Activated B cell treated with CpG ODN at 0.5 μM for 24 hours (primary cell): ENCODE measurements at regions of chr6 and their contacts with region 1.

Region 1: DNA sequence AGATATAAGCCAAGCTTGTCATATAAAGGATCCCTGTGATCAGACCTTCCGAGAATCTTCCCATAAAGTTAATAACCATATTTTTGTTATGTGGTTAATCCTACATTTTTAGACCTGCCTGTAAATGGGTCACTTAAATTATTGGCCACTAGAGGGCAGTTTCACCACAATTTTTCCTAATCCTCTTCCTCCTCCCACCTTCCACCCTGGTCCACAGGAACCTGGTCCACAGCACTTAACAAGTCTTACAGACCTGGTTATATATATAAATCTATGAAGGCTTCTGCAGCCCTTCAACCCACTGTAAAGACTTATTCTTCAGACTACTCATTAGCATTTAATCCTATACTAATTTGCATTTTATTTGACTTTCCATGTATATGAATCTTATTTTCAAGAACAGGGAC is 28.3 kb downstream of the MRS2 start:
- DNase-seq: no peak
- ATAC-seq: peak; percentile 42
- H3K4me3 Mint-ChIP-seq: no peak overlapping the region
- H3K27ac Mint-ChIP-seq: no peak overlapping the region
- H3K4me1 Mint-ChIP-seq: no peaks in the 10 kb centered on the region
- H3K27me3 Mint-ChIP-seq: no peaks in the 10 kb centered on the region
- CTCF ChIP-seq: peak; percentile 52

Region 2: GRCh38 chr6:24313251-24314141 is 117.6 kb before region 1 on chr6:
- CTCF ChIA-PET with region 1: no interaction called
- POLR2A ChIA-PET with region 1: no interaction called
- intact Hi-C with region 1: no loop called
- DNase-seq: no peak
- ATAC-seq: no peak
- H3K4me3 Mint-ChIP-seq: no peak overlapping the region
- H3K27ac Mint-ChIP-seq: no peak overlapping the region
- H3K4me1 Mint-ChIP-seq: no peaks in the 10 kb centered on the region
- H3K27me3 Mint-ChIP-seq: peaks cover 21% of the 10 kb centered on the region
- CTCF ChIP-seq: no peak

Region 3: GRCh38 chr6:24458134-24458533 is 27.1 kb after region 1 on chr6:
- CTCF ChIA-PET with region 1: no interaction called
- POLR2A ChIA-PET with region 1: no interaction called
- intact Hi-C with region 1: no loop called
- DNase-seq: no peak
- ATAC-seq: no peak
- H3K4me3 Mint-ChIP-seq: no peak overlapping the region
- H3K27ac Mint-ChIP-seq: no peak overlapping the region
- H3K4me1 Mint-ChIP-seq: no peaks in the 10 kb centered on the region
- H3K27me3 Mint-ChIP-seq: no peaks in the 10 kb centered on the region
- CTCF ChIP-seq: no peak

Region 4: GRCh38 chr6:24520929-24521546 is 90.0 kb after region 1 on chr6:
- CTCF ChIA-PET with region 1: interaction called, 7 read pairs
- POLR2A ChIA-PET with region 1: no interaction called
- intact Hi-C with region 1: loop called (anchors 1 kb)
- DNase-seq: peak; percentile 35
- ATAC-seq: peak; percentile 40
- H3K4me3 Mint-ChIP-seq: peak overlapping the region; percentile 42
- H3K27ac Mint-ChIP-seq: peak overlapping the region; percentile 88
- H3K4me1 Mint-ChIP-seq: peaks cover 62% of the 10 kb centered on the region
- H3K27me3 Mint-ChIP-seq: no peaks in the 10 kb centered on the region
- CTCF ChIP-seq: no peak